ENCODE measurements at regions of chr7 and their contacts with region 1.

Region 1: DNA sequence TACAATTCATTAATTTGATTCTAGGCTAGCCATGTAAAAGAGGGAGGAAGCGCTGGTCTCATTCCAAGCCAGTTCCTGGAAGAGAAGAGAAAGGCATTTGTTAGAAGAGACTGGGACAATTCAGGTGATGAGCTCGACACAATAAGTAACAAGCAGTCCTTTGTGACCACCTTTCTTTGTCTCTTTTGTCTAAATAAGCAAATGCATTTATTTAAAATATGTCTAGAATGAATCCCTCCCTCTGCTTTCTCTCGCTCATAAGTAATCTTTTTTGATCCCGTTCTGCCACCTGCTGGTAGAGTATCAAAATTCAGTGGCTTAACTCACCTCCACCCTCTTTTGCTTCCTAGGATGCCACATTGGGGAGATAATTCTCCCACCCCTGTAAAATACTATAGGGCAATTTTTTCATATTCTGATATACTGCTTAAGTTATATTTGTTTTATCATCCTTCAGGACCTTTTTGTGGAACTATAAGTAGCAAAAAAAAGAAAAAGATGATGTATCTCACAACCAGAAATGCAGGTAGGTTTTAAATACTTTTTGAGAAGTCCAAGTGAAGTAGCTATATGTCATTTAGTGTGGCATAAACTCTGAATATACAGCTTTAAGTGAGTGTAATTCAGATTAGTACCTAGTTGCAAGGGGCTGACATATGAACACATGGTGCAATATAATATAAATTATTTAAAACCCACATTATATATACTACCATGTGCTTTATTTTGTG is 91.5 kb downstream of the GSDME start:
- DNase-seq: no peak
- ATAC-seq: peak in 1 of 2 donors; percentile 59

Region 2: DNA sequence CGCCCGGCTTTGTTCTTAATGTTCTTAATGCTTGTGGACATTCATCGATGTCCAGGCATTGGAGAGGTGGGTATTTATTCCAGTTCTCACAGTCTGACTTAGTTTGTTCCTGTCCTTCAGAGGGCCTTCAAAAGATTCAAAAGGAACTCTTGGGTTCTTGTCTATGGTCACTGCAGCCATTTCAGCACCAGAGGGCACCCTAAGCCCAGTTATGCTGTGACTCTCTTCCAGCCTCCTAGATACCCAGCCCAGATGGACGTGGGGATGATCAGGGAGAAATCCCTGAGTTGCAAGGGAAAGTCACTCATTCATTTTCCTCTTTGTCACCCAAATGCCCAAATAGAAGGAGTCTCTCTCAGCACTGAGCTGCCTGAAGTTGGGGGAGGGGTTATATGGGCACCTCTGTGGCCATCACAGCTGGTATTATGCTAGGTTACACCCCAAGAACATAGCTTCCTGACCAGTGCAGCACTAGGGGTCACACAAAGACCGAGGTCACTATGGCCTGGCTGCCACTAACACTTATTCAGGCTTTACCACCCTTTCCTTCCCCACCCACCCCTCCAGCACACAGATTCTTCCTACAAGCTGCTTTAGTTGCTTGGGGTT is 1095.0 kb before region 1 on chr7:
- intact Hi-C with region 1: loop called in 1 of 2 experiments (anchors 10 kb)
- DNase-seq: peak; percentile 73
- ATAC-seq: peak; percentile 91 to 92

Region 3: DNA sequence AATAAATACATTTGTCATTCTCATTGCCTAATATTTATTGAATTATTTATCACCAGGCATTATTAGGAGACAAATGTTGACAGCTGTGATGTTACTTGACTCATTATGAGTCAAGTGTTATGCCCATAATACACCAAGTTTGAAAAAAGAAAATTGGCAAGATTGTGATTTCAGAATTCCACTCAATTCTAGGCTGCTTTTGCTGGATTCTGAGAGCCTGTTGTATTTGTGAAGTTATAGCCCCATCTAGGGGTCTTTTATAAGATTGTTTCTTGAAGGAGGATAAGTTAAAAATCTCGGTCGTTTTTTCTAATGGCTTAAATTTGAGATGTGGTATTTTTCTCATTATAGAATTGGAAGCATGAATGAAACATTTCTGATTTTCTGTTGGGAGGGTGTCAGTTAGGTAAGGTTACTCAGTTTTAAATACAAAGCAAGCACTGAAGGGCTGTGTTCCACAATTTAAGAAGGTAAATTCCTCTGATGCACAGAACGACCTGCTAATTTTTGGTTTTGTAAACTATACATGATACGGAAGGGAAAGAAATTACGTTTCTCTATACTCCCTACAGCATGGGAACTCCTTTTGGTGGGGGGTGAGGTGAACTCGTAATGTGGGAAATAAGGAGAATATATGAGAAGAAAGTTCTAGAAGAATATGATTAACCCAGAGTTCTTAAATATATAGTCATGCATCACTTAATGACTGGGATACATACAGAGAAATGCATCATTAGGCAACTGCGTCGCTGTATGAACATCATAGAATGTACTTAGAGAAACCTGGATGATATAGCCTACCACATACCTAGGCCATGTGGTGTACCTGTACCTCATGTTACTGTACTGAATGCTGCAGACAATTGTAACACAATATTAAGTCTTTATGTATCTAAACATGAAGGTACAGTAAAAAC is 953.1 kb before region 1 on chr7:
- intact Hi-C with region 1: loop called in 1 of 2 experiments (anchors 10 kb)
- DNase-seq: no peak
- ATAC-seq: peak; percentile 67 to 80

Region 4: DNA sequence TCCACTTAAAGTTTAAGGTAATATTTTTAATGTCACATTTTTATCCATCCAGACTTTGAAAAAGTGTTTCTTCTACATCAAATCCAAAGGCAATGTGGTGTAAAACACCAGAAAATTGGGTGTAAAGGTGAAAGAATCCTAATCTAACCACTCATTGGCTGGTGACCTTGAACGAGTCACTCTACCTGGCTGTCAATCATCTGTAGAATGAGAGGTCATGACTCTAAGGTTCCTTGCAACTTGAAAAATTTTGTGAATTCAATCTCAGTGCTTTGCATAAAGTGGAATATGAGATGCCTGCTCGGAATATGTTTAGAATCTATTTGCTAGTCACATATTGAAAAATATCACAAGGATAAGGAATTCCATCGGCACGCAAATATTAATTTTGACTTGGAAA is 463.6 kb before region 1 on chr7:
- intact Hi-C with region 1: no loop called
- DNase-seq: no peak
- ATAC-seq: no peak

Region 5: DNA sequence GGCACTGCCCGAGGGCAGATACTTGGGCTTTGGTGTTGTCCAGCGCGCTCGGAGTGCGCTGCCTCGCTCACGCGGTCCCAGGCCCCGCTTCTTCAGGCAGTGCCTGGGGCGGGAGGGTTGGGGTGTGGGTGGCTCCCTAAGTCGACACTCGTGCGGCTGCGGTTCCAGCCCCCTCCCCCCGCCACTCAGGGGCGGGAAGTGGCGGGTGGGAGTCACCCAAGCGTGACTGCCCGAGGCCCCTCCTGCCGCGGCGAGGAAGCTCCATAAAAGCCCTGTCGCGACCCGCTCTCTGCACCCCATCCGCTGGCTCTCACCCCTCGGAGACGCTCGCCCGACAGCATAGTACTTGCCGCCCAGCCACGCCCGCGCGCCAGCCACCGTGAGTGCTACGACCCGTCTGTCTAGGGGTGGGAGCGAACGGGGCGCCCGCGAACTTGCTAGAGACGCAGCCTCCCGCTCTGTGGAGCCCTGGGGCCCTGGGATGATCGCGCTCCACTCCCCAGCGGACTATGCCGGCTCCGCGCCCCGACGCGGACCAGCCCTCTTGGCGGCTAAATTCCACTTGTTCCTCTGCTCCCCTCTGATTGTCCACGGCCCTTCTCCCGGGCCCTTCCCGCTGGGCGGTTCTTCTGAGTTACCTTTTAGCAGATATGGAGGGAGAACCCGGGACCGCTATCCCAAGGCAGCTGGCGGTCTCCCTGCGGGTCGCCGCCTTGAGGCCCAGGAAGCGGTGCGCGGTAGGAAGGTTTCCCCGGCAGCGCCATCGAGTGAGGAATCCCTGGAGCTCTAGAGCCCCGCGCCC is 381.6 kb before region 1 on chr7 and contains the start of gene NPY:
- intact Hi-C with region 1: loop called in 1 of 2 experiments (anchors 10 kb)
- DNase-seq: no peak
- ATAC-seq: peak in 1 of 2 donors; percentile 15
- total RNA-seq, gene NPY: not detected

Region 6: DNA sequence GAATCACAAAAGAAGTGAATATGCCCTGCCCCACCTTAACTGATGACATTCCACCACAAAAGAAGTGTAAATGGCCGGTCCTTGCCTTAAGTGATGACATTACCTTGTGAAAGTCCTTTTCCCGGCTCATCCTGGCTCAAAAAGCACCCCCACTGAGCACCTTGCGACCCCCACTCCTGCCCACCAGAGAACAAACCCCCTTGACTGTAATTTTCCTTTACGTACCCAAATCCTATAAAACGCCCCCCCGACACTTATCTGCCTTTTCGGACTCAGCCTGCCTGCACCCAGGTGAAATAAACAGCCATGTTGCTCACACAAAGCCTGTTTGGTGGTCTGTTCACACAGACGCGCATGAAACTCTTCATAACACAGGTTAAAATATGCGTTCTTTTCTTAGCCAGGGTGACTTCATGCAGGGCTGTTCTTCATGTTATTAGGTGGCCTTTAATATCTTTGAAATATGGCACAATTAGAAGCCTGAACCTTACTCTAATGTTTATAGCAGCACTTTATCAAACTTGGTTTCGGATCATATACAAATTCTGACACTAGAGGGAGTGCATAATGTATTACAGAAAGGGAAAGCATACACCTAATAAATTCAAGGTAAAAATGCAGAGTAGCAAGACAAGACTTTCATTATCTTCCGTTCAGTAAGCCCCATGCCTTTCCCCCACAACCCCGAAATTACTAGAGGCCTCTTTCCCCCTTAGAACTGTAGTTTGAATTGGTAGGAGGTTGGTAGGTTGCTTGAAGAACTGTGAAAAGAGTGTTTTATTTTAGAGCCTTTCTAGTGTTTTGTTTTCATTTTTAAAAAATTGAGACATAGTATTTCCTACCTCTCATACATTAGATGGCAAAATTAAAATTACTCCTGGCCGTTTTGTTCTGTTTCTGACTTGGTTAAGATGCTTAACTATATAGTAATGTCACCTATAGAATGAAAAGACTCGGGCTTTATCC is 263.8 kb before region 1 on chr7:
- intact Hi-C with region 1: loop called in 1 of 2 experiments (anchors 2 kb)
- DNase-seq: no peak
- ATAC-seq: peak in 1 of 2 donors; percentile 29

Region 7: DNA sequence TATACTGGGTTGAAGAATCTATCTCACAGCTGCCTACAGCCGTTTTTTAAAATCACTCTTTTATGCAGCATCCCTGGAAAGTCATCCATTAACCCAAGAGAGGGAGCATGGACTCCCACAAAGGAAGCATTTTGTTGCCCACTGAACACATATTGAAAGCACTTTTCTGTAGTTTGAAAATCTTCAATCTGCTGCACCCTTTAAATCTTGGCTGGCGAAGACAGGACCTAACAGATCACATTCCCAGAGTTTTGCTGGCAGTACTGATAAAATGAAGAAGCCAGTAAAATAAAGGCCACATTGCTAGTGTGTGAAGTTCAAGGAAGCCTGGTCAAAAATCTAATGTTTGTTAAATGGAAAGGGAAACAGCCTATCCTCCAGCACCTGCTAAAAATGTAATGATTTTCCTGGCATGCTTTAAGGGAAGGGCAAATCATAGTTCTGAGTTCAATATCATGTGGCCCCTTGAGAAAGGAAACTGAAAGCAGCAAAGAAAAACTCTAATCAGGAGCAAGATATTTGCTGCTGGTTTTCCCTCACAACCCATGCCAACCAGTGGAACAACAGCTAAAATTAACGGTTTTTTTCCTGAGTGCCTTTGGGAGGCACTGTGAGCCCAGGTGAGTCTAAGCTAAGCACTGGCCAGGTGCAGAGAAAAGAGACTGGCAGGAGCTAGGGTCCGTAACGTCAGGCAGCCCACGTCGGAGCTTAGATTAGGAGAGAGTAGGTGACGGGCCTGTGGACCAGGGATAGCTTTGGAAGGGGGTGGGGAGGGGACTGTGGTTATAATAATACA is 190.4 kb before region 1 on chr7:
- intact Hi-C with region 1: no loop called
- DNase-seq: no peak
- ATAC-seq: no peak

Region 8: DNA sequence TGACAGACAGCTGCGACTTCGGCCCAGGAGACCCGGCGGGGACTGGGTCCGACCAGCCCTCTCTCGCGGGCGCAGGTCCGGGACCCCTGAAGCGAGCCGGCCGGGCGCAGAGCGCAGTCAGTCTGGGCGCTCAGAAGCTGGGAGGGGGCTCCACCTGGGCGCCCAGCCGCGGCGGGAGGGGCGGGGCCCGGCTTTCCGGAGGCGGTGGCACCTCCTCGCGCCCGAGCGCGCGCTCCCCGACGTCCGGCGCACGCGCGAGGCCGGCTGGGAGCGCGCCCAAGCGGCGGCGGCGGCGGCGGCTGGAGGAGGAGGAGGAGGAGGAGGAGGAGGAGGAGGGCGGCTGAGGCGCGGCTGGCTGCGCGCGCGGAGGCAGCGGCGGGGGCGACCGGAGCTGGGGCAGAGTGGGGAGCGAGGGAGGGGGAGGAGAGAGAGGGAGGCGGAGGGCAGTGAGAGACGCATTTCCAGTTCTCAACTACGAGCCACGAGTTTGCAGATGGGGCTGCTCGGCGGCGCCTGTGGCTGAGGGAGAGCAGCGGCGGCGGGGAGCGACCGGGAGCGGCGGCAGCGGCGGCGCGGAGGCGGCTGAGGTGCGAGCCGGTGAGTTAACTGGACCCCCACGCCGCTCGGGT is 92.6 kb before region 1 on chr7 and contains the start of gene PALS2:
- intact Hi-C with region 1: loop called in 1 of 2 experiments (anchors 10 kb)
- DNase-seq: peak; percentile 74
- ATAC-seq: peak; percentile 93 to 94
- total RNA-seq, gene PALS2: 13.6 to 15.1 TPM

Measured in left cardiac atrium (tissue), 4 donors.